ENCODE measurements at regions of chr14 and their contacts with region 1.

Region 1: DNA sequence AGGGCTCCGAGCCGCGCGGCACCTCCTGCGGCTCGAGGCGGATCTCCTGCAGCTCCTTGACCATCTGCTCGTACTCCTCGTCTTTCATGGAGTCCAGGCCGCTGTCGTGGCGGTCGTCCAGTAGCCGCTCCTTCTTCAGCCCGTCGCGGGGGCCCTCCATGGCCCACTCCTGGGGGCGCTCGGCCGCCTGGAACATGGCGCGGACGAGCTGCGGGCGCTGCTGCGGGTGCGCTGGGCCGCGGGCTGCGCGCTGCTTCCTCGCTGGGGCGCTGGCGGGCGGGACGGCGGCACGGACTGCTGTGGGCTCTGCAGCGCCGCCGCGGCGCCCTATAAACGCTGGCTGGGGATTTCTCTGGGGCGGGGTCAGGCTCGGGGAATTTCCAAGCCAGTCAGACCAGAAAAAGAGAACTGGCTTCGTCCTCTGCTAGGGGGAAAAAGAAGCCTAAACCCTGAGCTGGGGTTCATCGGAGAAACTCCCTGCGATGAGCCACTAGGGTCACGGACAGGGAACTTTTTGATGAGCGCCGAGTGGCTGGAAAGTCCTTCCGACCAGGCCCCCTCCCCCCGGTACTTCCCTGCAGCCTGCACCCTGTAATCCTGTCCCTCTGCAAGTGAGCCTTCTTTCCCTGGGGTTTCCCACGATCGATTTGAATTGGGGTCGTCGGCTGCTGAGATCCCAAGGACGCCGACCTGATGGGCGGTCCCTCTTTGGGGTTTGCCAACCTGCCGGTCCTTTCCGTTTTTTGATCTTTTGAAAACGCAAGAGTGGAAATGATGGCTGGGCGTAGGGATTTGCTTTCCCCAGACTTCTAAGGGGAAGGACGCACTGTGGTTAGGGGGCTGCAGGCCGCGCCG is at the start of gene NFKBIA:
- DNase-seq: peak; percentile 90
- ATAC-seq: peak; percentile 72
- H3K4me3 Mint-ChIP-seq: peak within 1 kb of the TSS; percentile 93
- H3K27ac Mint-ChIP-seq: peak within 1 kb of the TSS; percentile 97
- H3K4me1 Mint-ChIP-seq: peaks cover 52% of the 10 kb centered on the region
- H3K27me3 Mint-ChIP-seq: no peaks in the 10 kb centered on the region
- total RNA-seq, gene NFKBIA: 56.1 to 56.8 TPM

Region 2: DNA sequence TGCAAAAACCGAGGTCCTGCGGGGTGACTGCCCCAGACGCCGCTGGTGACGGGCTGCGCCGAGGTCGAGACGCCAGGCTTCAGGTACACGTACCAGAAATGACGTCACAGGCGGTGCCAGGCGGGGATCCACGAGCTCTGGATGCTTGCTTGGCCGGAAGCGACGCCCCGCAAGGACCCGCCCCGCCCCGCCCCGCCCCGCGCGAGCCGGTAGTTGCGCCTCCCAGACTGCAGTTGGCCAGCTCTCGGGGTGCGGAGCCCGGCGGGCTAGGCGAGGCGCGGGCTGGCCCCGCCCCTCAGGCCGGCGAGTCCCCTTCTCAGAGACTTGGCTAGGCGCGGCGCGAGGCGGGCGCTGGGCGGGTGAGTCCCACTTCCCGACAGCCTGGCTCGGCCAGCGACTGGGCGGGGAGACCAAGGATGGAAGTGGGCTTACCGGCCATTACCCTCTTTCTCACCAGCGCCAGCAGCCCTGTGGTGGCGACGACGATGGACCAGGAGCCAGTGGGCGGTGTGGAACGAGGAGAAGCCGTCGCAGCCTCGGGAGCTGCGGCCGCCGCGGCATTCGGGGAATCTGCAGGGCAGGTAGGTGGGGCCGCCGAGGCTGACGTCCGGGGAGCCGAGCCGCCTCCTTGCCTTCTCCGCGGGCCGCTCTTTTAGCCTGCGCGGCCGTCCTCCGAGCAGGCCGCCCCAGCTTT is 358.5 kb before region 1 on chr14 and contains the start of gene FAM177A1:
- CTCF ChIA-PET with region 1: interaction called, 4 read pairs
- POLR2A ChIA-PET with region 1: interaction called, 26 read pairs
- DNase-seq: peak; percentile 99
- ATAC-seq: peak; percentile 96
- H3K4me3 Mint-ChIP-seq: peak within 1 kb of the TSS; percentile 95
- H3K27ac Mint-ChIP-seq: peak within 1 kb of the TSS; percentile 99
- H3K4me1 Mint-ChIP-seq: peaks cover 36% of the 10 kb centered on the region
- H3K27me3 Mint-ChIP-seq: no peaks in the 10 kb centered on the region
- total RNA-seq, gene FAM177A1: 40.5 to 41.5 TPM

Region 3: DNA sequence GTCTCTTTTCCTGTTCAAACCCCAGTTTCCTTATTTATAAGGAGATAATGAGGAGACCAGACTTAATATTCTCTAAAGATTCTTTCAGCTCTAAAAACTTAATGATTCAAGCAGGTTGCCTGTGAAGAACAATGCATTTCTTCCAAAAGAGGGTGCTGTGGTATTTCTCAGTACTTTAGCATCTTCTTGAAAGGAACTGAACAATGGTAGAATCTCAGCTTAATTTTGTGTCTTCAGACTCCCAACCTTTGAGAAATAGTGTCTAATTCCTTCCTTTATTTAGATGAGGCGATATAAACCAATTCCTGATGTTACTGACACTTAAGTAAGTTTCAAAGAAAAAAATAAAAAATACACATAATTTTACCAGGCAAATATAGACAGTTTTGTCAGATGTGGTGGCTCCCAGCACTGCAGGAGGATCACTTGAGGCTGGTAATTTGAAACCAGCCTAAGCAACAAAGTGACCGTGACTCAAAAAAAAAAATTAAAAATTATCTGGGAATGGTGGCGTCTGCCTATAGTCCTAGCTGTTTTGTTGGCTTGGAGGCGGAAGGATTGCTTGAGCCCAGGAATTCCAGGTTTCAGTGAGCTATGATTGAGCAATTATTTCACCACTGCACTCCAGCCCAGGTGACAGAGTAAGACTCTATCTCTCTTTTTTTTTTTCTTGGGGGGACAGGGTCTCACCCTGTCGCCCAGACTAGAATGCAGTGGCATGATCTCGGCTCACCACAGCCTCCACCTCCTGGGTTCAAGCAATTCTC is 189.4 kb before region 1 on chr14:
- CTCF ChIA-PET with region 1: interaction called, 14 read pairs
- POLR2A ChIA-PET with region 1: interaction called, 6 read pairs
- DNase-seq: no peak
- ATAC-seq: no peak
- H3K4me3 Mint-ChIP-seq: no peak overlapping the region
- H3K27ac Mint-ChIP-seq: no peak overlapping the region
- H3K4me1 Mint-ChIP-seq: peaks cover 16% of the 10 kb centered on the region
- H3K27me3 Mint-ChIP-seq: no peaks in the 10 kb centered on the region

Region 4: GRCh38 chr14:35261774-35262173 is 142.9 kb before region 1 on chr14:
- CTCF ChIA-PET with region 1: interaction called, 21 read pairs
- POLR2A ChIA-PET with region 1: interaction called, 3 read pairs
- DNase-seq: no peak
- ATAC-seq: no peak
- H3K4me3 Mint-ChIP-seq: no peak overlapping the region
- H3K27ac Mint-ChIP-seq: no peak overlapping the region
- H3K4me1 Mint-ChIP-seq: no peaks in the 10 kb centered on the region
- H3K27me3 Mint-ChIP-seq: no peaks in the 10 kb centered on the region

Region 5: GRCh38 chr14:35301735-35302528 is 102.7 kb before region 1 on chr14:
- CTCF ChIA-PET with region 1: interaction called, 11 read pairs
- POLR2A ChIA-PET with region 1: interaction called, 27 read pairs
- DNase-seq: no peak
- ATAC-seq: peak; percentile 53
- H3K4me3 Mint-ChIP-seq: no peak overlapping the region
- H3K27ac Mint-ChIP-seq: peak overlapping the region; percentile 62
- H3K4me1 Mint-ChIP-seq: peaks cover 52% of the 10 kb centered on the region
- H3K27me3 Mint-ChIP-seq: no peaks in the 10 kb centered on the region

Region 6: DNA sequence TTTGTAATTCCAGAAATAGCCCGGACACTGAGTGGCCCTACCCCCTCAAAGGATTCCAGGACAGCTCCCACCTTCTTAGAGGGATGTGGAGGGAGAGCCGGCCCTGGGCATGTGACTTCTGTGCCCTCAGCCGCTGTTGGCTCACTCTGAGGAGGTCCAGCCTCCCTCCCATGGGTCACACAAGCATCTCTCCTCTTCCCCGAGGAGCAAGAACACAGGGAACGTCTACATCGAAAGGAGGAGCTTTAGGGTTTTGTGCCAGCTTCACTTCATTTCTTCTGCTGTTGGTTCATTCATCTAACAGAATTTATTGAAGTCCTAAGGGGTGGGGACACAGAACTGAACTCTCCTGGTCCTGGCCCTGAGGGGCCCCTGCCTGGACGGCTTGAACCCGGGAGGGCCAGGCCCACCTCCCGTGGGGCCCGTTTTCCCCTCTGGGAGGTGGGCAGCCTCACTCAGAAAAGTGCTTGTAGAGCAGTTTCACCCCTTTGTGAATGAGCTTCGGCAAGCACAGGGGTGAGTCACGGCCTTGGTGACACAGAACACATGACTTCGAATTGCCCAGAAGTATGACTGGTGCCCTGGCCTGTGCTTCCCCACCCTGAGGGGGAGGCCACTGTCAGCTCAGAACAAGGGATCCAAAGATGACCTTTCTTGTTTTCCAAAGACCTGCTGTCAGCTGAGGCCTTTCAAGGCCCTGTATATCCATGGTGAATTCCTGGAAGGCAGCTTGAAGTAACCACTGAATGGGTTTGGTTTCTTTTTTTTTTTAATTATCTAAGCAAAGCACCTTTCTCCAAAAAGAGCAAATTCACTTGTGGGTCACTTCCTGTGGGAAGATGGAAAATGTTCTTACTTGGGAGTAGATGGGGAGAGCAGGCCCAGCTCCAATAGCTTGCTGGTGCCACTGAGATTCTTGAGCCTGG is 39.3 kb before region 1 on chr14:
- CTCF ChIA-PET with region 1: interaction called, 30 read pairs
- POLR2A ChIA-PET with region 1: interaction called, 107 read pairs
- DNase-seq: peak; percentile 59
- ATAC-seq: peak; percentile 67
- H3K4me3 Mint-ChIP-seq: no peak overlapping the region
- H3K27ac Mint-ChIP-seq: peak overlapping the region; percentile 52
- H3K4me1 Mint-ChIP-seq: peaks cover 44% of the 10 kb centered on the region
- H3K27me3 Mint-ChIP-seq: no peaks in the 10 kb centered on the region

Region 7: GRCh38 chr14:35423621-35424020 is 18.9 kb after region 1 on chr14:
- CTCF ChIA-PET with region 1: interaction called, 112 read pairs
- POLR2A ChIA-PET with region 1: interaction called, 113 read pairs
- DNase-seq: no peak
- ATAC-seq: no peak
- H3K4me3 Mint-ChIP-seq: no peak overlapping the region
- H3K27ac Mint-ChIP-seq: no peak overlapping the region
- H3K4me1 Mint-ChIP-seq: peaks cover 12% of the 10 kb centered on the region
- H3K27me3 Mint-ChIP-seq: no peaks in the 10 kb centered on the region

Region 8: DNA sequence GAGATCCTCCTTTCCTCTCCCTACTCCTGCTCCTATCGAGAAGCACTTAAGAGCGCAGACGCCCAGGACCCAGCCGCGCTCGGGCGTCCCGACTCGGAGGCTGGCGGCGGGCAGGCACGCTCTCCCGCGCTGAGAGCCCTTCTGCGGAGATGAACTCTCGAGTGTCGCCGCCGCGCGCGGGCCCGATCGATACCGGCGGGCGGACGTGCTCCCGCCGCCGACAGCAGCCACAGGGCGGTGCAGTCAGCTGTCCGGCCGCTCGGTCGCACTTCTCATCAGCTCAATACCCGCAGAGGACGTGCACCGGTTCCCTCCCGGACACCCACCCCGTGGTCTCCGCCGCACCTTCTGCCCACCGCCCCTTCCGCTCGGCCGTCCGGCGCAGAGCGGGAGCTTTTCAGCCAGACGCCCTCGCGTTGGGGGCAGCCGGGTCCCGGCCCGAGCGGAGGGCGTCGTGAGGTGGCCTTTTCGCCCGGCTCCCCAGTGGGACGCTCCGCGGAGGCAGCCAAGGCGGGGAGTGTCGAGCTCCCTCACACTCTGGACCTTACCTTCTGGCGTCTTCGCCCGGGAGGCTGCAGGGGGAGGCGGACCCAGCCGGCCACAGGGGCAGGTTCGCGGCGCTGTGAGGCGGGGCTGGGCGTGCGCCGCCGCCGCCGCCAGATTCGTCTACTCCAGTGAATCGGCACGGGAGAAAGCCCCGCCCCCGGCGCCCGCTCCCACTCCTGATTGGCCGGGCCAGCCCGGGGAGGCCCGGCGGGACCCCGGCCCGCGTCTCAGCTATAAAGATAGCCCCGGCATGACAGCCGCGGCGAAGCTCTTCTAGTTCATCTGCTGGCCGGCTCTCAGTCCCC is 128.9 kb after region 1 on chr14 and contains the start of gene INSM2:
- CTCF ChIA-PET with region 1: no interaction called
- POLR2A ChIA-PET with region 1: no interaction called
- DNase-seq: peak; percentile 63
- ATAC-seq: peak; percentile 77
- H3K4me3 Mint-ChIP-seq: peak within 1 kb of the TSS; percentile 68
- H3K27ac Mint-ChIP-seq: no peak within 1 kb of the TSS
- H3K4me1 Mint-ChIP-seq: peaks cover 16% of the 10 kb centered on the region
- H3K27me3 Mint-ChIP-seq: peaks cover 51% of the 10 kb centered on the region
- total RNA-seq, gene INSM2: not detected

Measured in activated CD8-positive, alpha-beta T cell treated with anti-CD3 and anti-CD28 coated beads, Interleukin-2, amount 10 ng/mL, durations not matched to agents 7 days and 5 days (primary cell).